ENCODE measurements at regions of chrX and their contacts with region 1.

Region 1: GRCh38 chrX:49155900-49156837 is 6.4 kb upstream of the MAGIX start:
- DNase-seq: peak; percentile 76 to 93
- H3K4me3 ChIP-seq: peak overlapping the region; percentile 50 to 65
- H3K27ac ChIP-seq: peak overlapping the region; percentile 95 to 97
- H3K4me1 ChIP-seq: no peaks in the 10 kb centered on the region
- H3K27me3 ChIP-seq: no peaks in the 10 kb centered on the region
- CTCF ChIP-seq: peak; percentile 58 to 79 (median 74)

Region 2: GRCh38 chrX:47683146-47683828 is 1472.9 kb before region 1 on chrX:
- intact Hi-C with region 1: no loop called
- DNase-seq: no peak
- H3K4me3 ChIP-seq: no peak overlapping the region
- H3K27ac ChIP-seq: no peak overlapping the region
- H3K4me1 ChIP-seq: no peaks in the 10 kb centered on the region
- H3K27me3 ChIP-seq: no peaks in the 10 kb centered on the region
- CTCF ChIP-seq: no peak

Region 3: GRCh38 chrX:49120099-49120498 is 36.1 kb before region 1 on chrX:
- intact Hi-C with region 1: loop called (anchors 5 kb)
- DNase-seq: no peak
- H3K4me3 ChIP-seq: no peak overlapping the region
- H3K27ac ChIP-seq: no peak overlapping the region
- H3K4me1 ChIP-seq: peaks cover 0 to 5% of the 10 kb centered on the region in 2 donors
- H3K27me3 ChIP-seq: no peaks in the 10 kb centered on the region
- CTCF ChIP-seq: no peak

Region 4: DNA sequence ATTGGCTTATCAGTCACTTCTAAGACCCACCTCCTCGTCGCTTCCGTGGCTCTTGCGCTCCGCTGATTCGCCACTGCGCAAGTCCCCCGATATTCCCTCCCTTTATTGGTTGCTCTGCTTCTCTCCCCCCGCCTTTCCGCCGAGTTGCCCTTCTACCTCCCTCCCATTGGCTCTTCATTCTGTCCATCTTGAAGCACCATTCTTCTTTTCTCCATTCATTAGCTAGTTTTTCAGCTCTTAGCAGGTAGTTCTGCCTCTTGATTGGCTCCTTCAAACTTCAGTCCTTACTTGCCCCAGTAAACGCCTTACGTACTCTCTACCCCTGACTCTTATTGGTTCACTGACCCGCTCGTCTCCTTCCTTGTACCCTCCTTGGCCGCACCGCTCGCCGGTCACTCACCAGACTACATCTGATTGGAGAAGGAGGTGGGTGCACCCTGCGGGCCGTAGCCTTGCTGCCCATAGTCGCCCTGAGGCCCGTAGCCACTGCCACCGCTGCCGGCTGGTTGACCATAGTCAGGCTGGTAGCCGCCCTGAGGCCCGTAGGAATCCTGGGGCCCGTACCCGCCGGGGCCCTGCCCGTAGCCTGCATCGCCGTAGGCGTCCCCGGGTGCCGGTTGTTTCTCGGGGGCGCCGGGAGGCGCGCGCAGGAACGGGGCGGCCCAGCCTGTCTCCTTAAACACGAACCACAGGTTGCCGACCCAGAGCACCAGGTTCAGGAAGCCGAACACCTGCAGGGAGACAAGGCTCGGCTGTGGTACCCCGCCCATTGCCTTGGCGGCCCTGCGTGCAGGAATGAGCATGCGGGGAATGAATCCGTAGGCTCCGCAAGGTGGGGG is 35.1 kb after region 1 on chrX:
- intact Hi-C with region 1: loop called (anchors 1 kb)
- DNase-seq: peak; percentile 85 to 96
- H3K4me3 ChIP-seq: peak overlapping the region; percentile 57 to 78
- H3K27ac ChIP-seq: peak overlapping the region; percentile 81
- H3K4me1 ChIP-seq: no peaks in the 10 kb centered on the region
- H3K27me3 ChIP-seq: no peaks in the 10 kb centered on the region
- CTCF ChIP-seq: no peak